ENCODE measurements at regions of chr11 and their contacts with region 1.

Region 1: GRCh38 chr11:26014451-26015115 is 317.3 kb upstream of the ANO3 start:
- DNase-seq: no peak
- H3K4me3 ChIP-seq: no peak overlapping the region
- H3K27ac ChIP-seq: no peak overlapping the region
- H3K4me1 ChIP-seq: no peaks in the 10 kb centered on the region
- H3K27me3 ChIP-seq: no peaks in the 10 kb centered on the region
- CTCF ChIP-seq: no peak
- POLR2A ChIP-seq: no peak

Region 2: GRCh38 chr11:26078217-26078821 is 63.7 kb after region 1 on chr11:
- intact Hi-C with region 1: loop called in 1 of 2 experiments (anchors 10 kb)
- DNase-seq: no peak
- H3K4me3 ChIP-seq: no peak overlapping the region
- H3K27ac ChIP-seq: no peak overlapping the region
- H3K4me1 ChIP-seq: no peaks in the 10 kb centered on the region
- H3K27me3 ChIP-seq: no peaks in the 10 kb centered on the region
- CTCF ChIP-seq: no peak
- POLR2A ChIP-seq: no peak

Region 3: GRCh38 chr11:26319906-26320305 is 305.3 kb after region 1 on chr11:
- intact Hi-C with region 1: no loop called
- DNase-seq: no peak
- H3K4me3 ChIP-seq: no peak overlapping the region
- H3K27ac ChIP-seq: no peak overlapping the region
- H3K4me1 ChIP-seq: no peaks in the 10 kb centered on the region
- H3K27me3 ChIP-seq: no peaks in the 10 kb centered on the region
- CTCF ChIP-seq: no peak
- POLR2A ChIP-seq: no peak